OCI-LY7 (cell line): ENCODE measurements at regions of chr9 and their contacts with region 1.

Region 1: GRCh38 chr9:127199001-127199791 is 65.4 kb upstream of the GARNL3 start:
- DNase-seq: peak; percentile 85
- H3K4me3 ChIP-seq: no peak overlapping the region
- H3K27ac ChIP-seq: no peak overlapping the region
- H3K4me1 ChIP-seq: peaks cover 3% of the 10 kb centered on the region
- CTCF ChIP-seq: peak; percentile 87

Region 2: GRCh38 chr9:126939821-126940221 is 259.4 kb before region 1 on chr9:
- CTCF ChIA-PET with region 1: no interaction called
- POLR2A ChIA-PET with region 1: no interaction called
- intact Hi-C with region 1: loop called (anchors 1 kb)
- DNase-seq: no peak
- H3K4me3 ChIP-seq: no peak overlapping the region
- H3K27ac ChIP-seq: no peak overlapping the region
- H3K4me1 ChIP-seq: no peaks in the 10 kb centered on the region
- CTCF ChIP-seq: no peak

Region 3: GRCh38 chr9:126965541-126966428 is 233.4 kb before region 1 on chr9:
- CTCF ChIA-PET with region 1: no interaction called
- POLR2A ChIA-PET with region 1: no interaction called
- intact Hi-C with region 1: loop called (anchors 1 kb)
- DNase-seq: peak; percentile 55
- H3K4me3 ChIP-seq: no peak overlapping the region
- H3K27ac ChIP-seq: no peak overlapping the region
- H3K4me1 ChIP-seq: no peaks in the 10 kb centered on the region
- CTCF ChIP-seq: peak; percentile 89

Region 4: DNA sequence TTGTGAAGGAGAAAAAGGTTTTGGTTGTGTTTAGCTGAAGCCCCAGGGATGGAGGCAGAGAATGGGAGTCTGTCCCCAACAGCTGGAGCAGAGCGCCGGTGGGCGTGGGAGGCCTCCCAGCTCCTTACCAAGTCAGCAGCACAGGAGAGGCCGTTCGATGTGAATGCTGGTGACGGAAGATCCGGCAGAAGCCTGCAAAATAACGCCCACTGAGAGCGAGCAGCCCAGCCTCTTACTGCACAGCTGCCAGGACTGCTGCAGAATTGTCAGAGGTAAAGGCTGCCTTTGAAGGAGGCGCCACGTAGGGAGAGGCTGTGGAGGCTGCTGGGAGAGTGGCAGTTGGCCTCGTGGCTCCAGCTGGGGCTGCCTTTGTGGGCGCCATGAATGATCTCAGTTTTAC is 103.0 kb before region 1 on chr9:
- CTCF ChIA-PET with region 1: no interaction called
- POLR2A ChIA-PET with region 1: no interaction called
- intact Hi-C with region 1: loop called (anchors 10 kb)
- DNase-seq: no peak
- H3K4me3 ChIP-seq: no peak overlapping the region
- H3K27ac ChIP-seq: no peak overlapping the region
- H3K4me1 ChIP-seq: no peaks in the 10 kb centered on the region
- CTCF ChIP-seq: no peak